Activated T-helper 1 cell treated with anti-CD3 and anti-CD28 coated beads, Interleukin-12 subunit alpha, Interleukin-12 subunit beta, Interleukin-2, Interleukin-4 antibody, amounts not matched to agents 30 ng/mL and 10 ng/mL and 1 ng/mL, durations not matched to agents 14 hours and 24 hours and 36 hours (primary cell): ENCODE measurements at regions of chr21 and their contacts with region 1.

Region 1: DNA sequence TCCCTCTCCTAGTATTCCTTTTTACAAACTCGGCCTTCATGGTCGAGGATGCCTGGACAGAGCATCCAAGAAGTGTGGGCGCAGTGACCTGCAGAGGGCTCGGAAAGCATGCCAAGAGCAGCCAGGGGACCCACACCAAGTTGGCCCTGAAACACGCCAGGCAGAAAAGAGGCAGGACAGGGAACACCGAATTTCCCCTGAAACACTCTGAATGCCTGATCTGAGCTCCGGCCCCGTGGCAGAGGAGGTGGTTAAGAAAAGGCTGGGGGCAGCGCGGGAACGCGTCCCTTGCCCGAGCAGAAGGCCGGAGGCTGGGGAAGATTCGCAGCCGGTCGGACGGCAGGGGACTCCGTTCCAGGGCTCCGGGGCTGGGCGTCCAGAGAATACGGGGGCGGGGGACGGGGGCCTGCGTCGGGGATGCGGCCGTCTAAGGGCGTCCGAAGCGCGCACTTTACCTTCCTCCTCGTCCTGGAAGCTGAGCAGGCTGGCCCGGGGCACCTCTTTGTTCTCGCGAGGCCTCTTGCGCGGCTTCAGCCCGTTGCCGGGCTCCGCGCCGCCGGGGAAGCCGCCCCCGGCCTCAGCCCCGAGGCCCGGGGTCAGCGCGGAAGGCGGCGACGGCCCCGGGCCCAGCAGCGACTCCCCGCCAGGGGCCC is 558 bp downstream of the PAXBP1 start:
- DNase-seq: no peak
- H3K4me3 Mint-ChIP-seq: peak overlapping the region; percentile 99
- H3K27ac Mint-ChIP-seq: peak overlapping the region; percentile 98
- H3K4me1 Mint-ChIP-seq: peaks cover 66% of the 10 kb centered on the region
- H3K27me3 Mint-ChIP-seq: peaks cover 3% of the 10 kb centered on the region

Region 2: GRCh38 chr21:32278518-32279376 is 492.2 kb before region 1 on chr21 and contains the start of gene MIS18A:
- intact Hi-C with region 1: loop called (anchors 1 kb)
- DNase-seq: peak; percentile 95
- H3K4me3 Mint-ChIP-seq: peak within 1 kb of the TSS; percentile 100
- H3K27ac Mint-ChIP-seq: peak within 1 kb of the TSS; percentile 97
- H3K4me1 Mint-ChIP-seq: peaks cover 21% of the 10 kb centered on the region
- H3K27me3 Mint-ChIP-seq: no peaks in the 10 kb centered on the region
- total RNA-seq, gene MIS18A: 26.8 and 27.5 TPM in 2 replicates

Region 3: DNA sequence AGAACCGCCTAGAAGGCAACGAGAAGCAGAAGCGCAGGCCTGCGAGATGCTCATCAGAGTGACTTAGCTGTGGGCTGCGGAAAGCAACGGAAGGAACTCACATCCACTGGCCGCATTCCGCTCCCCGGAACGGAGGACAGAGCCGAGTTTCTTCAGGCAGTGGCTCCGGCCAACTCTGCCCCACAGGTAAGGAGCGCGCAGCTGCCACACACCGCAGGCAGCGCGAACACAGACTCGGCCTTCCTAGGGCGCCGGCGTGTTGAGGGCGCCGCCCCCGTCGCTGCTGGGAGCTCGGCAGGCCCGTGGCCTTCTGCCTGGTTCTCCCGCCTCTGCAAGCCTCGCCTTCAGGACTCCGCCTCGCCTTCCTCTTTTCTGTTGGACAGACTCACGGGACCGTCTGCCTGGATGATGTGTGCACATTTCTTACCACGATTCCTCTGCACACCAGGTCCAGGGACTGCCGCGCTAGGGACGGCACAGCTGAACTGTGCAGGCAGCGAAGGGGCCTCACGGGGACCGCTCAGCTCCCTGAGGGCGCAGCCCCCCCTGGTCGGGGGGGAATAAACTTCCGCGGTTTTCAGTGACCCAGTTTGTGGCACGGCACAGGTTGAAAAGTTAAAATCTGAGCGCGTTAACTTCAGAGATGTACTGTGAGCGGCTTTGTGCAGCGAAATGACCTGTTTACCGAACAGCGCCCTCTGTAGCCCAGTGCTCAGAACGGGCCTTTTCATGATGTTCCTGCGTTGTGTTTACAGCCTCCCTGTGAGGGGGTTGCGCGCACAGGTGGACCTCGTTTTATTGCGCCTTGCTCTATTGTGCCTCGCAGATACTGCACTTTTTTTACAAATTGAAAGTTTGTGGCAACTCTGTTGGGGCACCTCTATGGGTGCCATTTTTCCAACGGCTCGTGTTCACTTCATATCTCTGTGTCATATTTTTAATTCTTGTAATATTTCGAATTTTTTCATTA is 201.5 kb before region 1 on chr21:
- intact Hi-C with region 1: loop called (anchors 1 kb)
- DNase-seq: peak; percentile 67
- H3K4me3 Mint-ChIP-seq: peak overlapping the region; percentile 88
- H3K27ac Mint-ChIP-seq: peak overlapping the region; percentile 57
- H3K4me1 Mint-ChIP-seq: peaks cover 21% of the 10 kb centered on the region
- H3K27me3 Mint-ChIP-seq: peaks cover 12% of the 10 kb centered on the region

Region 4: DNA sequence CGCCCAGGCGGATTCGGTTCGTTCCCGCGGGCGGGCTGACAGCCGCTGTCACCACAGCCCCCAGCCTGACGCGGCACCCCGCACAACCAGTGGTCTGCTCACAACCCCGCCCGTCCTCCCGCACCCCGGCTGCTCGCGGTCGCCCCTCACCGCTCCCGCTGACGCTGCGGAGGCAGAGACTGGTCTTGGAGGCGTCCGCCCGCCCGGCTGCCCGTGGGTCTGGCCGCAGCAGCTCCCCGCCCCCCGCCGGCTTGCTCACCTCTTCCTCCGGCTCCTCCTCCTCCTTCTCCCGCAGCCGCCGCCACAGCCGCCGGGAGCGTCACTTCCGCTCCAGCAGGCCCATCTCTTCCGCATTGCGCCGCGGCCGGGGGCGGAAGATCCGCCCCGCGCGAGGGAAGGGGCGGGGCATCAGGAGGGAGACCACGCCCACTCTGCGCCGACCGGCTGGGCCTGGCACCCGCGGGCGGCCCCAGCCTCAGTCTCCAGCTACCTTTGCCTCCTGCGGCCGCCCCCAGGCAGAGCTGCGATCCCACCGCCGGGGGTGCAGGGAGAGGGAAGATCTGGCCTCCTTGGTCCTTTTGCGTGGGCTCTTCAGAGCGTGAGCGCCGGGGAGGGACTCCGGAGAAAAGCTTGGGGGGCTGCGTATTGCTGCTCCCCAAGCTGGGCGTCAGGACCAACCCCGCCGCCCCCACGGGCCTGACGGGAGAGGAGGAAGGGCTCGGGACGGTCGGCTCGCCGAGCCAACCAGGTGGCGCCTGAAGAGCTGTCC is 43.1 kb before region 1 on chr21 and contains the start of gene SYNJ1:
- intact Hi-C with region 1: loop called (anchors 1 kb)
- DNase-seq: peak; percentile 94
- H3K4me3 Mint-ChIP-seq: peak within 1 kb of the TSS; percentile 98
- H3K27ac Mint-ChIP-seq: peak within 1 kb of the TSS; percentile 96
- H3K4me1 Mint-ChIP-seq: peaks cover 48% of the 10 kb centered on the region
- H3K27me3 Mint-ChIP-seq: no peaks in the 10 kb centered on the region
- total RNA-seq, gene SYNJ1: 13.1 and 13.7 TPM in 2 replicates

Region 5: DNA sequence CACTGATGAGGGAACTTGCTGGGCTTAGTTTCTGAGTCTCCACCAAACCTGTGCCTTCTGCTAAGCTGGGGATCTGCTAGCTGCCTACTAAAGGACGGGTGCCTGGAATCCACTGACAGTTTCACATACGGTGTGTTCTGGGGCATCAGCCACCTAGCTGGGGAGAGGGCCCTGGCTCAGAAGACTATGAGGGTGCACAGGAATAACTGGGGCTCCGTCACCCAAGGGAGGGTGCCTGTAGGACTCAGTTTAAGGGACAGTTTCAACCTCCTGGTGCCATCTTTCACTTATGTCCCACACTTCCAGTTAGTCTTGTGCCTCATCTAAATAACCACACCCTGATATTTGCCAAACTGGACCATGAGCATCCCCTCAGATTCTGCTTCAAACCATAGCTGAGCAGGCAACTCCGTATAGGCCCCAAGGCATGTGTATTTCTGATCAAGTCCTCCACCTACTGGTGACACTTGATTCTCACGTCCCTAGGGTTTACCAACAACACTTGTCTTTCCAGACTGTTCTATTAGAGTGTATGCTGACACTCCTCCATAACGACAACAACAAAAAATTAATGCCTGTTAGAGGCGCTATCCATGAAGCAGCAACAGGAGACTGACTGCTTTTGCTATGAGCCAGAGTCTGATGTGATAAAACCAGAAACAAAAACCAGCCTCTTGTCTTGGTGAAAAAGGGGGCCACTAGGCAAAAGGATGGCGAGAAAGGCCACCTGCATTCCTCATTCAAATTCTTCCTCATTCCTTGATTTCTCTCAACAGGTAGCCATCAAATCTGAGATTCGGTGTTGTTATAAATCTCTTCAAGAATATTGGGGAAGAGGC is 55.6 kb after region 1 on chr21:
- intact Hi-C with region 1: loop called (anchors 1 kb)
- DNase-seq: peak; percentile 23
- H3K4me3 Mint-ChIP-seq: no peak overlapping the region
- H3K27ac Mint-ChIP-seq: no peak overlapping the region
- H3K4me1 Mint-ChIP-seq: no peaks in the 10 kb centered on the region
- H3K27me3 Mint-ChIP-seq: peaks cover 10% of the 10 kb centered on the region

Region 6: GRCh38 chr21:33380483-33380998 is 609.5 kb after region 1 on chr21:
- intact Hi-C with region 1: loop called (anchors 1 kb)
- DNase-seq: peak; percentile 70
- H3K4me3 Mint-ChIP-seq: peak overlapping the region; percentile 23
- H3K27ac Mint-ChIP-seq: peak overlapping the region; percentile 84
- H3K4me1 Mint-ChIP-seq: peaks cover 54% of the 10 kb centered on the region
- H3K27me3 Mint-ChIP-seq: peaks cover 40% of the 10 kb centered on the region

Region 7: DNA sequence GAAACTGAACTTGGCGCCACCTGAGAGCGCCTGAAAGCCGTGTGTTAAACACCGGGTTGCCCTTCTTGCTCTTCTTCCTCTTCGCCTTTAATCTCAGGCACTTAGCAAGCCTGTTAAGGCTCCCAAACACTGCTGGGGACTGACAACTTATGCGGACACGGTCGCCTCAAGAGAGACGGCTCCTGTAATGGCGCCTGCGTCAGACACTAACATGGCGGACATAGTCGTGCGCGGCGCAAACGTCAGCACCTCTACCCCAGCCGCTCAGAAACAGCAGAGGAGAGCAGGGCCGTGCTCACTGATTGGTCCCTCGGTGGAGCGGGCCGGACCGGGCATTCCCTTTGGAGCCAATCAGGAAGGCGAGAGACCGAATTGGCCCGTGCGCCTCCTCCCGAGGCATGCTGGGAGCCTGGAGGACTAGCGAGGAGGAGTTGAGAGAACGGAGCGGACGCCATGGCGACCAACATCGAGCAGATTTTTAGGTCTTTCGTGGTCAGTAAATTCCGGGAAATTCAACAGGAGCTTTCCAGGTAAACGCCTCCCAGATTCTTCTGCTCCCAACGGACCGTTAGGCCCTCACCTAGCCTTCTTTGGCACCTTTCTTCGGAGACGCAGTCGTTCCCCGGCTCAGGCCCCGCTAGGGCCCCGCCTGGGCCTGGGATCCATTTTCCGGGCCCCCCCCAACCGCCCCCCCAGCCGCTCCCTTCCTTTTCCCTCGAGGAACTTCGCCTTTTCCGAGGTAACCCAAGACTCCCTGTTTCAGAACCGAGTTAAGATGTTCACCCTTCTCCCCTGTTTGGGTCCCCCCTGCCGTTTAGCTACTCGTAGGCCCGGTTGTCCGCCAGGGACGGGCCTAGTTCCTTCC is 771.9 kb after region 1 on chr21 and contains the start of gene SON:
- intact Hi-C with region 1: loop called (anchors 1 kb)
- DNase-seq: peak; percentile 98
- H3K4me3 Mint-ChIP-seq: peak within 1 kb of the TSS; percentile 93
- H3K27ac Mint-ChIP-seq: peak within 1 kb of the TSS; percentile 99
- H3K4me1 Mint-ChIP-seq: peaks cover 43% of the 10 kb centered on the region
- H3K27me3 Mint-ChIP-seq: no peaks in the 10 kb centered on the region
- total RNA-seq, gene SON: 342 and 361 TPM in 2 replicates